Heart left ventricle (tissue), 16 donors: ENCODE measurements at regions of chr16 and their contacts with region 1.

Region 1: GRCh38 chr16:54286090-54286993 is at the start of gene IRX3:
- DNase-seq: peak; percentile 90 to 96 (median 91)
- ATAC-seq: peak; percentile 80 to 82 (median 80)
- H3K4me3 ChIP-seq: peak within 1 kb of the TSS; percentile 62 to 94 (median 76)
- H3K27ac ChIP-seq: peak within 1 kb of the TSS; percentile 76 to 98 (median 94)
- H3K4me1 ChIP-seq: peaks cover 0 to 29% (median 12%) of the 10 kb centered on the region in 12 donors
- H3K27me3 ChIP-seq: peaks cover 0 to 98% (median 9%) of the 10 kb centered on the region in 9 donors
- CTCF ChIP-seq: no peak
- POLR2A ChIP-seq: peak in 1 of 2 donors; percentile 59
- total RNA-seq, gene IRX3: 28.6 to 101 (median 46.0) TPM

Region 2: DNA sequence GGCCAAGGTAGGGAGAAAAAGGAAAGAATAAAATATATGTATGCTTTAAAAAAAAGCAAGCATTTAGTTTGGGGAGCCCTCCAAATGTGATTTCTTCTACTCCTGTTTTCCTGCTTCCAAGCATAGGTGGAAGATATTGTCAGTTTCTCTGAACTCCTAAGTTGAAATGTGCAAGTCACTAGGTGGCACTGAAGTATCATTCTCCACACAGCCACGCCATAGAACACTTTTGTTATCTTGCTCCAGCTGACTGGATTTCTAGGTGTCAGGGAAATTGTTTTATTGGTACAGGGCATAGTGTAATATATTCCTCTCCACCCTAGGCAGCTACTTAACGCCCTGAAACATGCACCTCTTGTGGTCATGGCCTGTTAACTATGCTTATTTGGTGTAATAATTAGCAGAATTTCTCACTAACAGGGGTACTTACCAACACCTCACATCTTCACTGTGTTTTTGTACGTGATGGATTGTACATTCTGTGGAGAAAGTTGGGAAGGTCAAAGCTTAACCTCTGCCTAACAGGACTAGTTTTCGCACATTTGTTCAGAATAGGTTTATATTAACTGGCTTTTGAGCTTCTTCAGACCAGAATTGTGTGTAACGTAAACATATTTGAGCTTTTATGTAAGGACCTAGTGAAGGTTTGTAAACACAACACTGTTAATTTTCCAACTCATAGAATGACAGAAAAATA is 513.0 kb before region 1 on chr16:
- intact Hi-C with region 1: loop called in 6 of 10 experiments (anchors 5 to 10 kb)
- DNase-seq: peak in 4 of 5 donors; percentile 21 to 35 (median 26)
- ATAC-seq: peak; percentile 84 to 94 (median 89)
- H3K4me3 ChIP-seq: no peak overlapping the region
- H3K27ac ChIP-seq: peak overlapping the region in 10 of 12 donors; percentile 17 to 66 (median 46)
- H3K4me1 ChIP-seq: peaks cover 0 to 85% (median 37%) of the 10 kb centered on the region in 12 donors
- H3K27me3 ChIP-seq: no peaks in the 10 kb centered on the region
- CTCF ChIP-seq: peak; percentile 38 to 70 (median 60)
- POLR2A ChIP-seq: no peak

Region 3: GRCh38 chr16:54193665-54194333 is 92.5 kb before region 1 on chr16:
- intact Hi-C with region 1: loop called in 7 of 10 experiments (anchors 1 to 5 kb)
- DNase-seq: peak; percentile 77 to 90 (median 84)
- ATAC-seq: peak; percentile 85 to 90 (median 89)
- H3K4me3 ChIP-seq: peak overlapping the region in 10 of 12 donors; percentile 5 to 52 (median 32)
- H3K27ac ChIP-seq: peak overlapping the region; percentile 52 to 97 (median 84)
- H3K4me1 ChIP-seq: peaks cover 0 to 19% (median 8%) of the 10 kb centered on the region in 12 donors
- H3K27me3 ChIP-seq: no peaks in the 10 kb centered on the region
- CTCF ChIP-seq: peak; percentile 75 to 95 (median 87)
- POLR2A ChIP-seq: no peak

Region 4: DNA sequence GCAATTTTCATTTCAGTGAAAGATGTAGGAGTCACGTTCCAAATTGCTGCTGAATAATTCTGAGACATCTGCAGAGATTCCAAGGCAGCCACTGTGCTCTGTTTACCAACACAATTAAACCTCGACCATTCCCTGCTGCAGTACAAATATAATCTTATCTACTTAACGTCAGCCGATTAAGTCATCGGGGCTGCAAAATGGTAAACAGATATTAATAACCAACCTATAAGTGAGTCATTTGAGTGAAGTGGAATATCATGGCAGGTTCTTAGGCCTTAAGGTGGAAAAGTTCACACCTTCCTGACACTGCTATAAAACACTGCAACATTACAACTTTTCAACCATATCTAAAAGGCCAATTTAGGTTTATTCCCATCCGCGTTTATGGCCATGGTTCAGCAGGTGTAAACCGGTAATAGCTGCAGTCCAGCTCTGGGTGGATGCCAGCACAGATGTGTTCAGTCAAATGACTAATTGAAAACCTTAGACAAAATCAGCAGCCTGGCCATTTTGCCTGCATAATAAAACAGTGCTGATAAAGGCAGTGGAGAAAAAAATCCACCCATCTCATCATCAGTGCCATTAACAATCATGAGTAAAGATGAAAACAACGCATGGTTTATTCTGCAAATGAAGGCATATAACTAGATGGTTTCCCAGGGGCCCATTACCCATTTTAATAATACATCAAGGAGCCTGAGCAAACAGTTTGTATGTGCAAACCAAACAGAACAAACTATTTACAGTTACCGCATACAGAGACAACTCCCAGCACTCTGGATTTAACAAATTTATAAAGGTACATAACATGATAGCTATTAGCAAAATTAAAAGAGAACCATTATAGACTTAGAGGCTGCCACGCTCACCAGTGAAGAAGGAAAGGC is 203.1 kb after region 1 on chr16:
- intact Hi-C with region 1: loop called in 4 of 10 experiments (anchors 5 kb)
- DNase-seq: no peak
- ATAC-seq: peak; percentile 21 to 83 (median 52)
- H3K4me3 ChIP-seq: no peak overlapping the region
- H3K27ac ChIP-seq: peak overlapping the region in 9 of 12 donors; percentile 19 to 73 (median 50)
- H3K4me1 ChIP-seq: peaks cover 5 to 47% (median 19%) of the 10 kb centered on the region in 12 donors
- H3K27me3 ChIP-seq: no peaks in the 10 kb centered on the region
- CTCF ChIP-seq: no peak
- POLR2A ChIP-seq: no peak

Region 5: GRCh38 chr16:54812229-54812628 is 525.9 kb after region 1 on chr16:
- intact Hi-C with region 1: loop called in 8 of 10 experiments (anchors 2 to 10 kb)
- DNase-seq: no peak
- ATAC-seq: peak in 1 of 4 donors; percentile 63
- H3K4me3 ChIP-seq: no peak overlapping the region
- H3K27ac ChIP-seq: no peak overlapping the region
- H3K4me1 ChIP-seq: peaks cover 0 to 6% (median 0%) of the 10 kb centered on the region in 12 donors
- H3K27me3 ChIP-seq: no peaks in the 10 kb centered on the region
- CTCF ChIP-seq: peak in 10 of 12 donors; percentile 8 to 56 (median 26)
- POLR2A ChIP-seq: no peak

Region 6: GRCh38 chr16:55323637-55324490 is 1037.5 kb after region 1 on chr16 and contains the start of gene IRX6:
- intact Hi-C with region 1: loop called in 1 of 10 experiments (anchors 5 kb)
- DNase-seq: peak in 4 of 5 donors; percentile 65 to 91 (median 76)
- ATAC-seq: peak; percentile 71 to 85 (median 83)
- H3K4me3 ChIP-seq: peak within 1 kb of the TSS; percentile 30 to 70 (median 58)
- H3K27ac ChIP-seq: peak within 1 kb of the TSS; percentile 50 to 98 (median 92)
- H3K4me1 ChIP-seq: peaks cover 0 to 19% (median 1%) of the 10 kb centered on the region in 12 donors
- H3K27me3 ChIP-seq: peaks cover 0 to 66% (median 32%) of the 10 kb centered on the region in 9 donors
- CTCF ChIP-seq: peak; percentile 21 to 76 (median 62)
- POLR2A ChIP-seq: no peak
- total RNA-seq, gene IRX6: 0.96 to 48.4 (median 12.4) TPM